ENCODE measurements at regions of chr10 and their contacts with region 1.

Region 1: DNA sequence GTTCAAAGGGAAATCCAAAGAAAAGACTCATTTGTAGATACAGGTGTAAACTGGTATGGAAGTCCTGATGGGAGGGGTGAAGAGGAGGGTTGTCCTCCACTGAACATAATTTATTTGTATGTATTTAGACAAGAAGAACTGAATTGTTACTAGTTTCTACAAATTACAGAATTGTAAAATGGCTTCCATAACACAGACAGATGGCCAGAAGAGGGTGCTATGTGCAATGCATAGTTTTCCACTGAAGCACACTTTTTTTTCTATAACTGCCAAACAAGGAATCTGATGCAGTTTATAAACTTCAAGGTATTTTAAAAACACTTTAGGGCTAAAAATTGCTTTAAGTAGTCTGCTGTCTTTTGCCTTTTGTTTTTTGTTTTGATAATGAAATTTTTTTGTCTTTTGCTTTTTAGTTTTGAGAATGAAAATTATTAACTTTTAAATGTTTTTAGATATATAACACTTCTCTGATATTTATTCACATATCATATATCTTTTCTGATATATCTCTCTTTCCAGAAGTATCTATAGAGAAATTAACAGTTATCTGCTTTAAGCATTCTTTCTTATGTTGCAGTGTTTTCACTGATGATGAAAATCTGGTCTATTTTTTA is 58.5 kb downstream of the PHYHIPL start:
- DNase-seq: peak; percentile 7
- ATAC-seq: no peak
- H3K4me3 Mint-ChIP-seq: no peak overlapping the region
- H3K27ac Mint-ChIP-seq: no peak overlapping the region
- H3K4me1 Mint-ChIP-seq: no peaks in the 10 kb centered on the region
- H3K27me3 Mint-ChIP-seq: no peaks in the 10 kb centered on the region

Region 2: DNA sequence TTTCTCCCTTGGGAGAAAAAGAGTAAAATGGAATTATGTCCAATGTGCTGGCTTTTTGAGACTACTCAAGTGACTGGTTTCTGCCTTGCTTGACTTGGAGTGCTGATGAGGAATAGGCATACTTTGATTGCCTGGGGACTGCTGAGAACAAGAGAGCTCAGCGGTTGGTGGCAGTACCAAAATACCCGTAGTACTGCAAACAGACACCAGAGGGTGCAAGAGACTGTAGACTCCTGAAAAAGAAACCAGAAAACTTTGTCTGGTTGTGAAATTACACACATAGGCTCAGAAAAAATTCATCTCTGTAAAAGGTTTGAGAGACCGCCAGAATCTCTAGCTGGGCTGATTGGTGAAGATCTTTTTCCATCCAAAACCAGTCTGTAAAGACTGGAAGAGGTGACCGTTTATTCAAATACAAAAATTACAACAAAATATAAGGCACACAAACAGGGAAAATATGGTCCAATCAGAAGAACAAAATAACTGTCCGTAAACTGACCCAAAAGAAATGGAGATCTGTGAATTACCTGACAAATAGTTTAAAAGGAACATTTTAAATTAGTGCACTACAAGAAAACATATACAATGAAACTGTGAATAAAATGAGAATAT is 703.7 kb before region 1 on chr10:
- CTCF ChIA-PET with region 1: no interaction called
- POLR2A ChIA-PET with region 1: no interaction called
- intact Hi-C with region 1: loop called in 1 of 2 experiments (anchors 10 kb)
- DNase-seq: peak; percentile 71
- ATAC-seq: peak; percentile 74
- H3K4me3 Mint-ChIP-seq: no peak overlapping the region
- H3K27ac Mint-ChIP-seq: no peak overlapping the region
- H3K4me1 Mint-ChIP-seq: no peaks in the 10 kb centered on the region
- H3K27me3 Mint-ChIP-seq: peaks cover 9% of the 10 kb centered on the region

Region 3: DNA sequence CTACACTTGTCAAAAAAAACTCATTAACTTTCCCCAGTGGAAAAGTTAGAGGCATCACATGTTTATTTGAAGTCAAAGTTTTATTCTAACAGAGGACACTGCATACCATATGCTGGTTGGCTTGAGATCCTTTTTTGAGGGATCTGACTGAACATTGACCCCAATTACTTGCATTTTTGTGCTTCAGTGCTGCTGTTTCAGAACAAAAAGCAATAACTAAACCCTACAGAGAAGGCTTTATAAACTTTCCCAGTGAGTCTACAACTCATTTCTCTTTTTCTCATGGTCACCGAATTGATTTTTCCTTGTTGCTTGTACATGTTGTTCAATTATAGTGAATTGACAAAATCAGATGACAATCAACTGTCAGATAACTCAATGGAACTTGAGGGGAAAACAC is 127.8 kb before region 1 on chr10:
- CTCF ChIA-PET with region 1: no interaction called
- POLR2A ChIA-PET with region 1: no interaction called
- intact Hi-C with region 1: no loop called
- DNase-seq: no peak
- ATAC-seq: no peak
- H3K4me3 Mint-ChIP-seq: no peak overlapping the region
- H3K27ac Mint-ChIP-seq: no peak overlapping the region
- H3K4me1 Mint-ChIP-seq: no peaks in the 10 kb centered on the region
- H3K27me3 Mint-ChIP-seq: no peaks in the 10 kb centered on the region